ENCODE measurements at regions of chr11 and their contacts with region 1.

Region 1: DNA sequence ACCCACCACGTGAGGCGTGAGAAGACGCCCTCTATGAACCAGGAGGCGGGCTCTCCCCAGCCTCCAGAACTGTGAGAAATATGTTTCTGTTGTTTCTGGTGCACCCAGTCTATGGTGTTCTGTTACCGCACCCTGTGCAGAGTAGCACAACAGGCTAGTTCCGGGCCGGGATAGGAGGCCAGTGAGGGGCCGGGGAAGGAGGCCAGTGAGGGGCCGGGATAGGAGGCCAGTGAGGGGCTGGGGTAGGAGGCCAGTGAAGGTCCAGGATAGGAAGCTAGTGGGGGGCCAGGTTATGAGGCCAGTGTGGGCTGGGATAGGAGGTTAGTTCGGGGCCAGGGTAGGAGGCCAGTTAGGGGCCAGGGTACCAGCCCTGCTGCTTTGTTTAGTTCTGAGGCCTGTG is 204.6 kb downstream of the BARX2 start:
- DNase-seq: no peak
- ATAC-seq: peak in 3 of 8 donors; percentile 37 to 79 (median 55)
- H3K4me3 ChIP-seq: no peak overlapping the region
- H3K27ac ChIP-seq: no peak overlapping the region
- H3K4me1 ChIP-seq: no peaks in the 10 kb centered on the region
- H3K27me3 ChIP-seq: peaks cover 0 to 19% (median 0%) of the 10 kb centered on the region in 7 donors
- CTCF ChIP-seq: no peak

Region 2: GRCh38 chr11:127598476-127598875 is 1981.8 kb before region 1 on chr11:
- intact Hi-C with region 1: loop called in 1 of 10 experiments (anchors 5 kb)
- DNase-seq: no peak
- ATAC-seq: no peak
- H3K4me3 ChIP-seq: no peak overlapping the region
- H3K27ac ChIP-seq: no peak overlapping the region
- H3K4me1 ChIP-seq: no peaks in the 10 kb centered on the region
- H3K27me3 ChIP-seq: peaks cover 0 to under 1% (median 0%) of the 10 kb centered on the region in 7 donors
- CTCF ChIP-seq: no peak

Region 3: GRCh38 chr11:129639300-129639699 is 59.0 kb after region 1 on chr11:
- intact Hi-C with region 1: loop called in 1 of 10 experiments (anchors 10 kb)
- DNase-seq: no peak
- ATAC-seq: no peak
- H3K4me3 ChIP-seq: no peak overlapping the region
- H3K27ac ChIP-seq: no peak overlapping the region
- H3K4me1 ChIP-seq: no peaks in the 10 kb centered on the region
- H3K27me3 ChIP-seq: peaks cover 0 to 11% (median 0%) of the 10 kb centered on the region in 7 donors
- CTCF ChIP-seq: no peak